ENCODE measurements at regions of chr2 and their contacts with region 1.

Region 1: GRCh38 chr2:45778720-45779171 is 127.3 kb downstream of the PRKCE start:
- DNase-seq: peak; percentile 76
- ATAC-seq: peak; percentile 81
- H3K4me3 Mint-ChIP-seq: peak overlapping the region; percentile 6
- H3K27ac Mint-ChIP-seq: no peak overlapping the region
- H3K4me1 Mint-ChIP-seq: peaks cover 10% of the 10 kb centered on the region
- H3K27me3 Mint-ChIP-seq: no peaks in the 10 kb centered on the region

Region 2: DNA sequence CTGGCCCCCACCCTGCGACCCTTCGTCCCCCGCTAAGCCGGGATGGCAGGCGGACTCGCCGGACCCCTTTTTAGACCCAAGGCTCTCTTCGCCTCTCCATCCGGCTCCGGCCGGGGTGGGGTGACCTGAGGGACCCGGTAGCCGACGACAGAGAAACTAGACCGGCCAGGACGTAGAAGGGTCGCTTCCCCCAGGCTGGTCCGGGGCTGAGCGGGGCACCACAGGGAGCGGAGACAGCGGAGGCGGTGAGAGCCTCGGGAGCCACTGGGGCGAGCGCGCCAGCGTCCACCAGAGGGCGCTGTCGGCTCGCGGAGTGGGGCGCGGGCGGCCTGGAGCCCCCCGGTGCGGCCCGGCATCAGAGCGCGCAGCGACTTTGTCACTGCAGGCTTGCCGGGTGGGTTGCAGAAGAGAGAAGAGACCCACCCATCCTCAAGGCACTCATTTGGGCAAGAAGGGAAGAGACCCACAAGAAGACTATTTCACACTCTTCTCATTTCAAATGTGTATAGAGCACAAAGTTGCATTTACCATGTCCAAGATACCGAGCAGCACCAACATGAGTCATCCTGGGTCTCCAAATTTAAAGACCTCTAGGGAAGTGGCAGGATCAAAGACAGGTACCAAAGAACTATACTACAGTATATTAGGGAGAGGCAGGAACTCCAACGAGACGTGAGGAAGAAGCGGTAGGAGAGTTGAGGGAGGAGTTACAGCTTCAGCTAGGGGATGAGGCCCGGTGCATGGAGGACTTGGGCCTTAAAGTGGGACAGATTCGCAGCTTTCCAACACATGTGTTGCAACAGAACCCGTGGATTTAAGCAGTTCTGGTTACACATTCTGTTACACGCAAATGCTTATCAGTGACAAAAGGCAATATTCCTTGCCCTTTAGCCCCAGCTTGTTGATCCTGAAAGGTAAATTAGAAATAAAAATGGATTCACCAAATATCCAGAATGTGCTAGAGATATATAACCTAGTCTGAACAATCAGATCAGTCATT is 134.9 kb before region 1 on chr2:
- CTCF ChIA-PET with region 1: interaction called, 60 read pairs
- POLR2A ChIA-PET with region 1: interaction called, 3 read pairs
- DNase-seq: peak; percentile 68
- ATAC-seq: peak; percentile 99
- H3K4me3 Mint-ChIP-seq: peak overlapping the region; percentile 62
- H3K27ac Mint-ChIP-seq: no peak overlapping the region
- H3K4me1 Mint-ChIP-seq: peaks cover 17% of the 10 kb centered on the region
- H3K27me3 Mint-ChIP-seq: peaks cover 25% of the 10 kb centered on the region

Region 3: GRCh38 chr2:45650851-45651414 is 127.8 kb before region 1 on chr2:
- CTCF ChIA-PET with region 1: interaction called, 60 read pairs
- POLR2A ChIA-PET with region 1: no interaction called
- DNase-seq: peak; percentile 95
- ATAC-seq: peak; percentile 91
- H3K4me3 Mint-ChIP-seq: peak overlapping the region; percentile 92
- H3K27ac Mint-ChIP-seq: peak overlapping the region; percentile 99
- H3K4me1 Mint-ChIP-seq: peaks cover 31% of the 10 kb centered on the region
- H3K27me3 Mint-ChIP-seq: peaks cover 8% of the 10 kb centered on the region

Region 4: GRCh38 chr2:45794134-45794617 is 15.4 kb after region 1 on chr2:
- CTCF ChIA-PET with region 1: interaction called, 24 read pairs
- POLR2A ChIA-PET with region 1: no interaction called
- DNase-seq: no peak
- ATAC-seq: no peak
- H3K4me3 Mint-ChIP-seq: no peak overlapping the region
- H3K27ac Mint-ChIP-seq: no peak overlapping the region
- H3K4me1 Mint-ChIP-seq: no peaks in the 10 kb centered on the region
- H3K27me3 Mint-ChIP-seq: no peaks in the 10 kb centered on the region

Region 5: GRCh38 chr2:45889053-45889452 is 110.3 kb after region 1 on chr2:
- CTCF ChIA-PET with region 1: interaction called, 13 read pairs
- POLR2A ChIA-PET with region 1: interaction called, 3 read pairs
- DNase-seq: peak; percentile 70
- ATAC-seq: peak; percentile 85
- H3K4me3 Mint-ChIP-seq: no peak overlapping the region
- H3K27ac Mint-ChIP-seq: no peak overlapping the region
- H3K4me1 Mint-ChIP-seq: peaks cover 48% of the 10 kb centered on the region
- H3K27me3 Mint-ChIP-seq: no peaks in the 10 kb centered on the region

Region 6: DNA sequence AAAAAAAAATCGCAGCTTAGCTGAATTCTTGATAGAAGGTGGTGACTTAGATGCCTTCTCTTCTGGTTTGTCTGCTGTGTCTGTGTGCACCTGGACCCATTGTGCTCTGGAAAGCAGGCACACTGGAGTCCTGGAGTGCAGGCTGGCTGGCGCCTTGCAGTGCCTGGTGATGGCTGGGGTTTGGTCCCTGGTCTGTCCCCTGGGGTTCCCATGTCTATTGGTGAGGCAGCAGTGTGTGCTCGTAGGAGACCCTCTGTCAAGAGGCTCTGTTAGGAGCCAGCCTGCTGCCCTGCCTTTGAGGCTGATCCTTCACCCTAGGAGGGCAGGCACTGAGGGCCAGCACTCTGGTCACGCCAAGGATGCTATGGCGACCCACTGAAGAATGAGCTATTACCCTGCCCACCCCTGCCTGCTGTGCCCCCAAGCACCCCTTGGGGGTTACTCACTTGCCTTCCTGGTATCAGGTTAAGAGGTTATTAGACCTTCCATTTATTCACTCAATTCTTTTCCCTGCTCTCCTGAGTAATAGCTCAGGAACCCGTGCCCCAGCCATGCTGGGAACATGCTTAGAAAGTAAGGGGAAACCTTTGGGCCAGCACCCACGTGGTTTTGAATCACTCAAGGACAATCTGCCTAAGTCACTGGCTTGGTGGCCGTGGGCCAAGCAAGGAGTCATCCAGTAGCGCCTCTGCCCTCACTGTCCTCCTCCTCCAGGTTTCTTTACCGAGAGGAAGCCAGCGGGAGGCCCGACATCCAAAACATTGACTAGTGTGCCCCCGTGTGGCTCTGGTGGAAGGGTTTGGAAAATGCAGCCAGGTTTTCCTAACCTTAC is 157.3 kb after region 1 on chr2:
- CTCF ChIA-PET with region 1: interaction called, 50 read pairs
- POLR2A ChIA-PET with region 1: interaction called, 3 read pairs
- DNase-seq: peak; percentile 65
- ATAC-seq: peak; percentile 79
- H3K4me3 Mint-ChIP-seq: no peak overlapping the region
- H3K27ac Mint-ChIP-seq: no peak overlapping the region
- H3K4me1 Mint-ChIP-seq: peaks cover 7% of the 10 kb centered on the region
- H3K27me3 Mint-ChIP-seq: no peaks in the 10 kb centered on the region

Region 7: GRCh38 chr2:46164581-46165301 is 386.0 kb after region 1 on chr2:
- CTCF ChIA-PET with region 1: no interaction called
- POLR2A ChIA-PET with region 1: no interaction called
- DNase-seq: no peak
- ATAC-seq: no peak
- H3K4me3 Mint-ChIP-seq: no peak overlapping the region
- H3K27ac Mint-ChIP-seq: no peak overlapping the region
- H3K4me1 Mint-ChIP-seq: peaks cover 6% of the 10 kb centered on the region
- H3K27me3 Mint-ChIP-seq: no peaks in the 10 kb centered on the region